ENCODE measurements at regions of chr17 and their contacts with region 1.

Region 1: GRCh38 chr17:51764387-51764972 is 394.0 kb downstream of the CA10 start:
- DNase-seq: peak; percentile 61 to 72
- H3K4me3 ChIP-seq: no peak overlapping the region
- H3K4me3 Mint-ChIP-seq: no peak overlapping the region
- H3K27ac Mint-ChIP-seq: no peak overlapping the region
- H3K4me1 ChIP-seq: no peaks in the 10 kb centered on the region
- H3K4me1 Mint-ChIP-seq: no peaks in the 10 kb centered on the region
- H3K27me3 ChIP-seq: no peaks in the 10 kb centered on the region
- H3K27me3 Mint-ChIP-seq: peaks cover 14% of the 10 kb centered on the region
- CTCF ChIP-seq: peak; percentile 87 to 90

Region 2: DNA sequence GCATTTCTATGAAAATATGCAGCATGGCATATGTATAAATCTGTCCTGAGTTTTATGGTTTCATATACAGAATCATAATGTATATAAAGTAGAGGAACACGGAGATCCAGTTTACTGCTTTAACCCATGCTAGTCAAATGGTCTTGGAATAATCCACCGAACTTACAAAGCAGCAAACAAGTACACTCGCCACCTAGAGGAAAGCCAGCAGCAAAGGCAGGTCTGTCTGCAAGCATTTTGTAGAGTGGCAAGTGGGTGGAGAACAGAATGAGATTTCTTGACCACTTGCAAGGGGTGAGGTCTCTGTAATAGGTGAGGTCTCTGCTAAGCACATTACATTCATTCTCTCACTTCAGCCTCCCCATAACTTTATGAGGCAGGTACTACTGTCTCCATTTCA is 85.7 kb after region 1 on chr17:
- CTCF ChIA-PET with region 1: interaction called, 4 read pairs
- POLR2A ChIA-PET with region 1: no interaction called
- intact Hi-C with region 1: loop called (anchors 1 kb)
- DNase-seq: peak in 1 of 2 experiments; percentile 15
- H3K4me3 ChIP-seq: no peak overlapping the region
- H3K4me3 Mint-ChIP-seq: no peak overlapping the region
- H3K27ac Mint-ChIP-seq: no peak overlapping the region
- H3K4me1 ChIP-seq: no peaks in the 10 kb centered on the region
- H3K4me1 Mint-ChIP-seq: no peaks in the 10 kb centered on the region
- H3K27me3 ChIP-seq: no peaks in the 10 kb centered on the region; the same call in none of the 2 replicates
- H3K27me3 Mint-ChIP-seq: peaks cover 13% of the 10 kb centered on the region
- CTCF ChIP-seq: peak; percentile 12 to 38

Region 3: DNA sequence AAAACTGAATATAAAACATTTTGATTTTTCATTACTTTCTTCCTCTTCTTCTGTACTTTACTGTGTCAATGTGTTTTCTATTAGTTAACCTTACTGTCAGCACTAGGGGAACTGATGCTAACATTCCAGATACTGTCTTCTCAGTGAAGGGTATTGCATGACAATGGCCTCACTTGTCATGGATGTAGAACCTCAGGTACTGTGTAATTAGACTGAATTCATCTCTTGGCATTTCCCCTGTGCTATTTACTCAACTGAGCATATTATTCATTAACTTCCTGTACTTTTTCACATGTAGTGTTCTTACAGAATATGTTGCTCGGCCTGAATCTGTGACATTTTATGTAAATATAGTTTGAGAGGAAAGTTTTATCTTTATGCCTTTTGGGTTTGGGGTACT is 157.0 kb after region 1 on chr17:
- CTCF ChIA-PET with region 1: no interaction called
- POLR2A ChIA-PET with region 1: no interaction called
- intact Hi-C with region 1: loop called (anchors 10 kb)
- DNase-seq: no peak
- H3K4me3 ChIP-seq: no peak overlapping the region
- H3K4me3 Mint-ChIP-seq: no peak overlapping the region
- H3K27ac Mint-ChIP-seq: no peak overlapping the region
- H3K4me1 ChIP-seq: no peaks in the 10 kb centered on the region
- H3K4me1 Mint-ChIP-seq: no peaks in the 10 kb centered on the region
- H3K27me3 ChIP-seq: no peaks in the 10 kb centered on the region
- H3K27me3 Mint-ChIP-seq: peaks cover 16% of the 10 kb centered on the region
- CTCF ChIP-seq: no peak

Region 4: GRCh38 chr17:52035336-52035915 is 270.9 kb after region 1 on chr17:
- CTCF ChIA-PET with region 1: no interaction called
- POLR2A ChIA-PET with region 1: no interaction called
- intact Hi-C with region 1: loop called (anchors 10 kb)
- DNase-seq: no peak
- H3K4me3 ChIP-seq: no peak overlapping the region
- H3K4me3 Mint-ChIP-seq: no peak overlapping the region
- H3K27ac Mint-ChIP-seq: no peak overlapping the region
- H3K4me1 ChIP-seq: no peaks in the 10 kb centered on the region
- H3K4me1 Mint-ChIP-seq: no peaks in the 10 kb centered on the region
- H3K27me3 ChIP-seq: no peaks in the 10 kb centered on the region
- H3K27me3 Mint-ChIP-seq: peaks cover 16% of the 10 kb centered on the region
- CTCF ChIP-seq: no peak

Region 5: GRCh38 chr17:52106638-52107261 is 342.3 kb after region 1 on chr17:
- CTCF ChIA-PET with region 1: interaction called, 39 read pairs
- POLR2A ChIA-PET with region 1: no interaction called
- intact Hi-C with region 1: loop called (anchors 1 kb)
- DNase-seq: peak in 1 of 2 experiments; percentile 54
- H3K4me3 ChIP-seq: no peak overlapping the region
- H3K4me3 Mint-ChIP-seq: no peak overlapping the region
- H3K27ac Mint-ChIP-seq: no peak overlapping the region
- H3K4me1 ChIP-seq: no peaks in the 10 kb centered on the region
- H3K4me1 Mint-ChIP-seq: no peaks in the 10 kb centered on the region
- H3K27me3 ChIP-seq: no peaks in the 10 kb centered on the region
- H3K27me3 Mint-ChIP-seq: peaks cover 3% of the 10 kb centered on the region
- CTCF ChIP-seq: peak; percentile 70 to 89

Region 6: DNA sequence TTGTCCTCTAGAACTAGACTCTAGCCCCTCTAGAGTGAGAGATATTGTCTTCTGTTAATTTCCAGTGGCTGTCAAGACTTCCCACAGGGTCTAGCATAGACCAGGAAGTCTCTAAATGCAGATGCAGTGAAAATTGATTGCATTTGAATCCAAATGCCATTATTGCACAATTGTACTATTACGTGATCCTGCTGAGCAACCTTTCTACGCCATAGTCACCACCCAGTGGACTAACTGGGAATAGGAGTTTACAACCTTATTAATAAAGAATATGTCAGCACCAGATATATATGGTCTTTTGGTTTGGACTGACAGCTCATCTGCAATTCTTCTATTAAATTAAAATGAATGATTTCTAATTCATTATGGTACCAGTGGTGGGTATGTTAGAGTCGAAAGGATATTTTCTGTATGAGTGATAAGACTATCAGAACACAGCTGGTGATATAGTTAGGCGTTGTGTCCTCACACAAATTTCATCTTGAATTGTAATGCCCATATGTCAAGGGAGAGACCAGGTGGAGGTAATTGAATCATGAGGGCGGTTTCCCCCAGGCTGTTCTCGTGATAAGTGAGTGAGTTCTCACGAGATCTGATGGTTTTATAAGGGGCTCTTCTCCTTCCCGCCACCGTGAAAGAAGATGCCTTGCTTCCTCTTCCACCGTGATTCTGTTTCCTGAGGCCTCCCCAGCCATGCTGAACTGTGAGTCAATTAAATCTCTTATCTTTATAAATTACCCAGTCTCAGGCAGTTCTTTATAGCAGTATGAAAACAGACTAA is 532.9 kb after region 1 on chr17:
- CTCF ChIA-PET with region 1: no interaction called
- POLR2A ChIA-PET with region 1: no interaction called
- intact Hi-C with region 1: loop called (anchors 1 kb)
- DNase-seq: peak in 1 of 2 experiments; percentile 26
- H3K4me3 ChIP-seq: no peak overlapping the region
- H3K4me3 Mint-ChIP-seq: no peak overlapping the region
- H3K27ac Mint-ChIP-seq: no peak overlapping the region
- H3K4me1 ChIP-seq: no peaks in the 10 kb centered on the region
- H3K4me1 Mint-ChIP-seq: no peaks in the 10 kb centered on the region
- H3K27me3 ChIP-seq: no peaks in the 10 kb centered on the region
- H3K27me3 Mint-ChIP-seq: peaks cover 2% of the 10 kb centered on the region
- CTCF ChIP-seq: peak; percentile 44 to 48